ENCODE measurements at regions of chr9 and their contacts with region 1.

Region 1: GRCh38 chr9:136493567-136493971 is 10.7 kb upstream of the SEC16A start:
- DNase-seq: no peak
- H3K4me3 ChIP-seq: no peak overlapping the region
- H3K27ac ChIP-seq: no peak overlapping the region
- H3K4me1 ChIP-seq: no peaks in the 10 kb centered on the region
- H3K27me3 ChIP-seq: no peaks in the 10 kb centered on the region
- CTCF ChIP-seq: no peak
- EP300 ChIP-seq: no peak
- POLR2A ChIP-seq: no peak

Region 2: DNA sequence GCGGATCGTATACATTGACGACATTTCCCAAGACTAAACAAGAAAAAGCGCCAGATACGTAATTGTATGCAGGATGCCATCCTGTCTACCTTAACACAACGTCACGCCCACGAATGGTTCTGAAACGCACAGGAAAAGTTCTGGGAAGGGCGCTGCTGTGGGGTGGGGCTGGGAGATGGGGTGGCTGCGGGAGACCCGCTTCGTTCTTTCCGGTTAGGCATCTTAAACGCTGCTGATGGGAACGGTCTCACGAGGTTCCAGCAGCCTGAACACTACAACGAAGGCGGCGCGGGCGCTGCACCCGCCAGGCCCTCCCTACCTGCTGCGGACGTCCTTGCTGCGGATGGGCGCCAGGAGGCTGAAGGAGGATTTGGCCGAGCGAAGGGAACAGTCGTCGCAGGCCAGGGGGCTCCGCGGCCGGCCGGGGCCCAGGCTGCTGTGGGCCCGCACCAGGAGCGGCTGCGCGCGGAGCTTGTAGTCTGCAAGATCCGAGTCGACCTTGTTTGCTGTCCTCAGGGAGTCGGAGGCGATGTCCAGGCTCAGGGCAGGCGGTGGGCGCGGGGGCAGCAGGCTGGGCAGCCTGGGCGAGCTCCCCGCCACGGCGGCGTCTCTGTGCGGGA is 55.2 kb before region 1 on chr9:
- intact Hi-C with region 1: no loop called
- DNase-seq: no peak
- H3K4me3 ChIP-seq: peak overlapping the region; percentile 89
- H3K27ac ChIP-seq: no peak overlapping the region
- H3K4me1 ChIP-seq: peaks cover 13% of the 10 kb centered on the region
- H3K27me3 ChIP-seq: no peaks in the 10 kb centered on the region
- CTCF ChIP-seq: no peak
- EP300 ChIP-seq: no peak
- POLR2A ChIP-seq: no peak

Region 3: DNA sequence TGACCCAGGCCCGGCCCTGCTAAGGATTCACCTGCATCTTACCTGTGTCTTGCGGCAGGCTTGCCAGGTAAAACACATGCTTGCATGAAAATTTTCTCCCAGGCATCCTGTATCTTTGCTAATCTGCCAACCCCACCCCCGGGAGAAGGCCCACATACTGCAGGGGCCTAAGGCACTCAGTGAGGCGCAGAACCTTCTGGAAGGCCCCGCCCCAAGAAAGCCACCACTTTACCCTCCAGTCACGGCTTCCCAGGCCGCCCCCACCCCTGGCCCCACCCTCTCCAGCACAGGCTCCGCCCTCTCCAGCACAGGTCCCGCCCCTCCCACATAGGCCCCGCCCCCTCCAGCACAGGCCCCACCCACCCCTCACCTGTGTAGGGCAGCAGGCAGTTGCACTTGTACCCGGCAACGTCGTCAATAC is 19.1 kb after region 1 on chr9:
- intact Hi-C with region 1: no loop called
- DNase-seq: no peak
- H3K4me3 ChIP-seq: no peak overlapping the region
- H3K27ac ChIP-seq: no peak overlapping the region
- H3K4me1 ChIP-seq: no peaks in the 10 kb centered on the region
- H3K27me3 ChIP-seq: no peaks in the 10 kb centered on the region
- CTCF ChIP-seq: no peak
- EP300 ChIP-seq: no peak
- POLR2A ChIP-seq: no peak

Region 4: DNA sequence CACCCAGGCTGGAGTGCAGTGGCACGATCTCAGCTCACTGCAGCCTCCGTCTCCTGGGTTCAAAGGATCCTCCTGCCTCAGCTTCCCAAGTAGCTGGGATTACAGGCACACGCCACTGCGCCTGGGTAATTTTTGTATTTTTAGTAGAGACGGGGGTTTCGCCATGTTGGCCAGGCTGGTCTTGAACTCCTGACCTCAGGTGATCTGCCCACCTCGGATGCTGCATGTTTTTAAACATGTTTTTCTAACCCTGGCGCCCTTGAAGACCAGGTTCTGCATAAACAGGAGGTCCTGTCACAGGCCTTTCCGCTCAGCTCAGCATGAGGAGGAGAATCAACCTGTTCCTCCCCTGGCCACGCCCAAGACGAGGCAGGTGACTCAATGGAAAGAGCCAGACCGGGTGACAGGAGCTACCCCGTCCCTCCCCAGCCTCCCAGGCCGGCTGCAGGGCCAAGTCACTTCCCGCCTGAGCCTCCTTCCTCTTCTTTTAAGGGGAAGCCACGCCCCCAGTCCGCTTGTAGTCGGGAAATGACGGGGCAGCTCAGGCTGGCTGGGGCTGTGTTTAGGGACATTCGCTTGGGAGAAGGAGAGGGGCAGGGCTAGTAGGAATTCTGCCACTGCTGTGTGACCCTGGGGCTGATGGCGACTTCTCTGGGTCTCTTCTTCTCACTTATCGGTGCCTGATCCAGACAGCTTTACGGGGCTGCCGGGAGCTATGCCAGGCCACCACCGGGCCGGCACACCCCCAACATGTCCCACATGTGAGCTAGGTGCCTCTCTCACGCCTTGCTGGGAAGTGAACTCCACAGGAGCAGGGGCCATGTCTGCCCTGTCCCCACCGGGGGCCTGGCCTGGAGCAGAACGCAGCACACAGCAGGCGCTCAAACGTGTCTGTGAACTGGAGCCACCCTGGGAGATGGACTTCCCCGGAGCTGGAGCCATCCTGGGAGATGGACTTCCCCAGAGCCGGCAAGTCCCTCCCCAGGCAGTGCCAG is 46.2 kb after region 1 on chr9:
- intact Hi-C with region 1: loop called in 2 of 4 experiments (anchors 5 to 10 kb)
- DNase-seq: peak in 4 of 5 donors; percentile 43 to 74 (median 60)
- H3K4me3 ChIP-seq: no peak overlapping the region
- H3K27ac ChIP-seq: no peak overlapping the region
- H3K4me1 ChIP-seq: peaks cover 3% of the 10 kb centered on the region
- H3K27me3 ChIP-seq: no peaks in the 10 kb centered on the region
- CTCF ChIP-seq: no peak
- EP300 ChIP-seq: peak; percentile 73
- POLR2A ChIP-seq: no peak

Region 5: GRCh38 chr9:136928591-136928990 is 435.0 kb after region 1 on chr9:
- intact Hi-C with region 1: no loop called
- DNase-seq: no peak
- H3K4me3 ChIP-seq: no peak overlapping the region
- H3K27ac ChIP-seq: no peak overlapping the region
- H3K4me1 ChIP-seq: no peaks in the 10 kb centered on the region
- H3K27me3 ChIP-seq: no peaks in the 10 kb centered on the region
- CTCF ChIP-seq: no peak
- EP300 ChIP-seq: no peak
- POLR2A ChIP-seq: no peak